Lower leg skin (tissue), 4 donors: ENCODE measurements at regions of chr6 and their contacts with region 1.

Region 1: GRCh38 chr6:169441292-169441691 is 187.6 kb upstream of the THBS2 start:
- DNase-seq: no peak
- H3K4me3 ChIP-seq: no peak overlapping the region
- CTCF ChIP-seq: no peak
- POLR2A ChIP-seq: no peak

Region 2: DNA sequence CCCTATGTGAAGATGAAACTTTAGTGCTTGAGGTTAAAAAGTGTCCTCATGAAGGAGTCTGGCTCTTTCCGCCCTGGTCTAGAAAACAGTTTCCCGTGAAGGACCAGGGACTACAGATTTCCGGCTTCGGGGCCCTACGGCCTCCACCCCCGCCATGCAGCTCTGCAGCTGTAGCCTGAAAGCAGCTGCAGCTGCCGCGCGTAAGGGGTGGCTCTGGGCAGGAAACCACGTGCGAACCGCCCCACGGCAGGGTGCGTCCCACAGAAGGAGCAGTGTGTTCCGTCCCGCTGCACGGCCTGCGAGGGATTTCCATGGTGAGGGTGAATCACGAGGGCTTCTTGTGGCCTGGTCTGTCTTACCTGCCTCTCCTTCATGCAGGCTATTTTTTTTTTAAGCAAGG is 427.2 kb after region 1 on chr6:
- intact Hi-C with region 1: no loop called
- DNase-seq: peak in 1 of 2 donors; percentile 86
- H3K4me3 ChIP-seq: no peak overlapping the region
- CTCF ChIP-seq: no peak
- POLR2A ChIP-seq: no peak

Region 3: DNA sequence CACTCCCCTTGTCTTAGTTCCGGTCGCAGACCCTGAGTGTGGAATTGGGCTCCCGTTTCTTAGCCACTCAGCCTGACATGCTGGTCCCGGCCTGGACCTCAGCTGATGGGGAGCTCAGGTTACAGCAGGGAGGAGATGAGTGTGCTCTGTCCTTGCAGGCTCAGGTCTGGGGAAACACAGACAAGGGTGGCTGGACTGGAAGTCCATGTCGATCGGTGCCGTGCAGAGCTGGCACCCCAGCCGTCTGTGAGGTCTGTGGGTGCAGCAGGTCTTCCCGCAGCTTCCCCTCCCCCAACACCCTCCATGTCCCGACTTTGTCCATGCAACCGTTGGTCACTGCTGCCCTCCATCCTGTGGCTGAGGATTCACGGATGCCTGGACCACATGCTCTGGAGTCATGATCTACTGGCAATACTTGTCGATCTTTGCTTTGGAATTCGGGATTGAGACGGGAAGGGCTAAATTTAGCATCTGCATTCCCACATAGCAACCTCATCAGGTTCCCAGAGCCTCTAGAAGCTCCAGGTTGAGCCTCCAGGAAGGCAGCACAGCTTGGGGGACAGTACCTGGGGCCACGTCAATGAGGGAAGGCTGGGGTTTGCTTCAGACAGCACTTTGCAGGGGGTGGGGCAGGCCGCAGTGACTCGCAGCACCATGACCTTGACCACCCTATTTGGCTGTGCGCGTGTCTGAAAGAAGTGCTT is 993.0 kb after region 1 on chr6:
- intact Hi-C with region 1: loop called (anchors 5 kb)
- DNase-seq: peak in 1 of 2 donors; percentile 70
- H3K4me3 ChIP-seq: no peak overlapping the region
- CTCF ChIP-seq: no peak
- POLR2A ChIP-seq: no peak